Activated B cell treated with CpG ODN at 0.5 μM for 24 hours (primary cell): ENCODE measurements at regions of chr2 and their contacts with region 1.

Region 1: DNA sequence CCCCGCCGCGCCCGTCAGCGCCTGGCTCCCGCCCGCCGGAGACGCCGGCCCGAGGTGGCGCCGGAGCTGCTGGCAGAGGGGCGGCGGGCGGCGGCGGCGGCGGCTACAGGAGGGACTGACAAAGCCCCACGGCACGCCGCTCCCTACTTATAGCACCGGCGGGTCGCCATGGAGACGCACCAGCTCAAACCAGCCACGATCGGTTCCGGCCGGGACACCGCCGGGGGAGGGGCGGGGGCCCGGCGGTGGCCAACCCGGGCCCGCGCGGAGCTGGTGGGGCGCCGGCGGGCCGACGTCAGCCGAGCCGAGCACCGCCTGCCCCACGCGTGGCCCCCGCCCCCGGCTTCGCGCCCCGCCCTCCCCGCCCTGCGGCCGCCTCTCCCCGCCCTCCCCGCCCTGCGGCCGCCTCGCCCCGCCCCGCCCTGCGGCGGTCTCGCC is at the start of gene ODC1:
- DNase-seq: peak; percentile 98
- ATAC-seq: peak; percentile 80
- H3K4me3 Mint-ChIP-seq: peak within 1 kb of the TSS; percentile 85
- H3K27ac Mint-ChIP-seq: peak within 1 kb of the TSS; percentile 85
- H3K4me1 Mint-ChIP-seq: peaks cover 44% of the 10 kb centered on the region
- H3K27me3 Mint-ChIP-seq: no peaks in the 10 kb centered on the region
- CTCF ChIP-seq: no peak
- total RNA-seq, gene ODC1: 192 and 200 TPM in 2 replicates

Region 2: GRCh38 chr2:9799665-9800632 is 648.3 kb before region 1 on chr2:
- CTCF ChIA-PET with region 1: no interaction called
- POLR2A ChIA-PET with region 1: interaction called, 13 read pairs
- intact Hi-C with region 1: no loop called
- DNase-seq: peak; percentile 82
- ATAC-seq: peak; percentile 97
- H3K4me3 Mint-ChIP-seq: peak overlapping the region; percentile 50
- H3K27ac Mint-ChIP-seq: peak overlapping the region; percentile 42
- H3K4me1 Mint-ChIP-seq: peaks cover 20% of the 10 kb centered on the region
- H3K27me3 Mint-ChIP-seq: peaks cover 3% of the 10 kb centered on the region
- CTCF ChIP-seq: peak; percentile 65

Region 3: GRCh38 chr2:10043906-10044601 is 404.2 kb before region 1 on chr2:
- CTCF ChIA-PET with region 1: no interaction called
- POLR2A ChIA-PET with region 1: interaction called, 7 read pairs
- intact Hi-C with region 1: loop called (anchors 1 kb)
- DNase-seq: peak; percentile 88
- ATAC-seq: peak; percentile 68
- H3K4me3 Mint-ChIP-seq: peak overlapping the region; percentile 76
- H3K27ac Mint-ChIP-seq: peak overlapping the region; percentile 72
- H3K4me1 Mint-ChIP-seq: peaks cover 26% of the 10 kb centered on the region
- H3K27me3 Mint-ChIP-seq: no peaks in the 10 kb centered on the region
- CTCF ChIP-seq: no peak

Region 4: DNA sequence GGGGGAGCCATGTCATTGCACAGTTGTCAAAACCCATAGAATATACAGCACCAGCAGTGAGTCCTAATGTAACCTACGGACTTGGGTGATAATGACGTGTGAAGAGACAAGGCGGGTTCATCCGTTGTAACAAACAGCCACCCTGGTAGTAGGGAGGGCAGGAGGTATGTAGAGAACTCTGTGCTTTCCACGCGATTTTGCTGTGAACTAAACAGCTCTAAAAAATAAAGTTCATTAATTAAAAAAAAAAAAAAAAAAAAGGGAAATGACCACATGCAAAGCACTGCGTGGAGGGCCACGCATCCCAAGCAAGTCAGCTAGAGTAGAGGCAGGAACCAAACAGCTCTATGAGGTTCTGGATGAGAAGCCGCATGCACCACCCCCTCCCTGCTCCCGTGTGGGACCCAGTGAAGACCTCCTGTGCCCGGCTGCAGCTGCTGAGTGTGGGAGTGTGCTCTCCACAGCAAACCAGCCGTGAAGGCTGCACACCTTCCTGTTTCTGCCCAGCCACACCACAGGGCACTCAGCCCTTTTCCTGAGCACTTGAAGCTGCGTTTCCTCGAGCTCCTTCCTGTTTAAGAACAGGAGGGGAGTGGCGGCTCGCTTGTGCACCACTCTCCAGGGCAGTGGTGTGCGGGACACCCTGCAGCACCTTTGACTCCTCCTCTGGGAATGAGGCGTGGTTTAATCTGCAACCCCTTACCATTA is 65.7 kb before region 1 on chr2:
- CTCF ChIA-PET with region 1: no interaction called
- POLR2A ChIA-PET with region 1: interaction called, 9 read pairs
- intact Hi-C with region 1: loop called (anchors 2 kb)
- DNase-seq: peak; percentile 46
- ATAC-seq: peak; percentile 64
- H3K4me3 Mint-ChIP-seq: peak overlapping the region; percentile 58
- H3K27ac Mint-ChIP-seq: peak overlapping the region; percentile 59
- H3K4me1 Mint-ChIP-seq: peaks cover 91% of the 10 kb centered on the region
- H3K27me3 Mint-ChIP-seq: no peaks in the 10 kb centered on the region
- CTCF ChIP-seq: no peak

Region 5: DNA sequence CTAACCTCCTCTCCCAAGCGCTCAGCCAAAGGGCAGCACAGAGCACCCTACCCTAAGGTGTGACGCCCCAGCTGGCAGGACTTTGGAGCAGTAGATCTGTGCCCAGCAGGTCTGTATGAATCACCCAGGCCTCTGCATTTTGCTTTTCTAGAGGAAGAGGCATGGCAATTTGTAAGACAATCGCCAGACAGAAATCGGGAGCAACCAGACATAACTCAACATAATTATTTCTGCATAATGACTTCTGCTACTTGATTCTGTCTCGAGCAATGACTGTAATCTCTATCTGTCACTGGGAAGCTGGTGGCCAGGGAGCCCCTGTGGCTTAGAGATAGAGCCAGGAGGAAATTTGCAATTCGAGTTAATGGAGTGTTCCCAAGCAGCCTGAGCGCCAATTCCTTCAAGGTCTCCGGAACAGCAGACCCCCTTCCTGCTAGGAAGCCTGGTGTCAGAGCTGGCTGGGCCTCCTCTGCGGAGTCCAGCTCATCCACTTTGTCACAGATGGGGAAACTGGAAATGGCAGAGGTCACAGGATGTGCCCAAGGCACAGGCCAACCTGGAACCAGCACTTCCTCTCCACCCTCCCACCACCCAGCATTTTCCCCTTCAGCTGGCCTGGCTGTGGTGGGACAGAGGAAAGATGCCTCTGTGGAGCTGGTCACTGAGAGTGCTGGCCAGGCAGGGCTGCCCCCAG is 55.1 kb before region 1 on chr2:
- CTCF ChIA-PET with region 1: no interaction called
- POLR2A ChIA-PET with region 1: no interaction called
- intact Hi-C with region 1: no loop called
- DNase-seq: no peak
- ATAC-seq: no peak
- H3K4me3 Mint-ChIP-seq: no peak overlapping the region
- H3K27ac Mint-ChIP-seq: no peak overlapping the region
- H3K4me1 Mint-ChIP-seq: peaks cover 48% of the 10 kb centered on the region
- H3K27me3 Mint-ChIP-seq: no peaks in the 10 kb centered on the region
- CTCF ChIP-seq: no peak

Region 6: DNA sequence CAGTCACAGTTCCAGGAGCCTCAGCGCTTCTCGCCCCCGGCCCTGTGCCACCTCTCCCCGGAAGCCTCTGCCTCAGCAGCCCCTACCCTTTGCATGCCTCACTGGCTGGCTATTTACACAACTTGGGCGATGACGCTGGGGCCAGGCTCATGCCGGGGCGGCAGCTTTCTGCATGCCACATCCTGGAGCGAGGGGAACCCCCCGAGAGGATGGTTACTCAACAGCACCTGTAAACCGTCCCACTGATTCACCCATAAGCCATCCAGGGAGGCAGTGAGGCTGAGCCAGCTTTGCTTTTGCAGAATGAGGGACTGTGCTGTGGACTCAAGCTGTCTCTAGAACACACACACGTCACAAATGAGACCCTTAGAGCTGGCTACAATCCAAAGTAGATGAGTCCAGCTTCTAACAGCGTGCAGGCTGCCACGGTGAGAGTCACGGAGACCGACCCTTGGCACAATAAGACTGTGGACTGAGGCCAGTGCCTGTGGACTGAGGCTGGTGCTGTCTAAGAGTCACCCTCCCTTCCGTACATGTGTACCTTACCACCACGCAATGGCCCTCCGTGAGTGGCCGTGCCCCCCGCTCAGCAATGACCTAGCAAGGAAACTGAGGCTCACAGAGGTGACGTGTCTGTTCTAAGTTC is 45.5 kb after region 1 on chr2:
- CTCF ChIA-PET with region 1: no interaction called
- POLR2A ChIA-PET with region 1: interaction called, 12 read pairs
- intact Hi-C with region 1: loop called (anchors 2 kb)
- DNase-seq: peak; percentile 42
- ATAC-seq: peak; percentile 96
- H3K4me3 Mint-ChIP-seq: no peak overlapping the region
- H3K27ac Mint-ChIP-seq: peak overlapping the region; percentile 46
- H3K4me1 Mint-ChIP-seq: peaks cover 15% of the 10 kb centered on the region
- H3K27me3 Mint-ChIP-seq: peaks cover 15% of the 10 kb centered on the region
- CTCF ChIP-seq: no peak

Region 7: DNA sequence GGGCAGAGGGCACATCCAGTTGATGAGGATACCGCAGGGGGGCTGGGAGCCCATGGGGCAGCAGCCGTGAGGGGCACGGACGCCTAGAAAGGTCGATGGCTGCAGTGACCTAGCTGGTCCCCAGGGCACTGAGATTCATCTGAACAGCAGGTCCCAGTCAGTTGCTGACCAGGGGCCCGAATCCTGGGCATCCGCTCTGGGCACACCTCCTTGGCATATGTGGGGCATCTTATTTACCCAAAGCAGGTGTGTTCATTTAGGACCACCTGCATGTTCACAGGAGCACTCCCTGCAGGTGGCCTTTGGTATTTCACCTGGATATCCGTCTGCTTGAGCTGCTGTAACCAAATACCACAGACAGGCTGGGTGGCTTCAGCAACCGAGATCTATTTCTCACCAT is 71.9 kb after region 1 on chr2:
- CTCF ChIA-PET with region 1: no interaction called
- POLR2A ChIA-PET with region 1: no interaction called
- intact Hi-C with region 1: no loop called
- DNase-seq: no peak
- ATAC-seq: no peak
- H3K4me3 Mint-ChIP-seq: no peak overlapping the region
- H3K27ac Mint-ChIP-seq: no peak overlapping the region
- H3K4me1 Mint-ChIP-seq: no peaks in the 10 kb centered on the region
- H3K27me3 Mint-ChIP-seq: peaks cover 2% of the 10 kb centered on the region
- CTCF ChIP-seq: no peak

Region 8: DNA sequence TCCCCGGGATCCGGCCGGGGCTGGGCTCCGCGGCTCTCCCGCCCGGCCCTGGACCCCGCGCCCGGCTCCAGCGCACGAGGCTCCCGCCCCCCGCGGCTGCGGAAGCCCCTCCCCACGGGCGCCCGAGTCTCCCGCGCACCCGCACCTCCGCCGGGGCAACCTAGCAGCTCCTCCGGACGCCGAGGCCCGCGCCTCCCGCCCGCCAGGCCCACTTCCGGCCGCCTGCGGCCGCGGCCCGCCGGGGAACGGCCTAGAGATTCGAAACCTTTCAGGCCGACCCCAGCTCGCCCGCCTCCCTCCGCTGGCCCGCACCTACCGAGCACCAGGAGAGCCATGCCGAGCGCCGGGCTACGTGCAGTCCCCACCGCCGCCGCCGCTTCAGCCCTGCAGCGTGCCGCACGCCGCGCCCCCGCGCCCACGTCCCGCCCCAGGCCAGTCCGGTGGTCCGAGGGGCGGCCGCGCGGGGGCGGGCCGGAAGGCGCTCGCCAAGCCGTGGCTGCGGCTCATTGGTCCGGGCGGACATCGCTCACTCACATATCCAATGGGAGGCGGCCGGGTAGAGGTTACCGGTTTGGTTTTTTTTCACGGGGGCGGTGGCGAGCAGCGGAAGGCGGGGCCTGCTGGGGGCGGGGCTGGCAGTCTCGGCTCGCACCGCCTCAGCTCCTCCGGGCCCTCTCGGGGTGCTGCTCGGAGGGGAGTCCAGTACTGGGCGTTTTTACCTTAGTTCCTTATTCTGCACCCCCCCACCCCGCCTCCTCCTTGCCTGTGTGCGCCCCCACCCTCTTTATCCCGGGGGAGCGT is 364.3 kb after region 1 on chr2 and contains the start of gene PDIA6:
- CTCF ChIA-PET with region 1: no interaction called
- POLR2A ChIA-PET with region 1: interaction called, 8 read pairs
- intact Hi-C with region 1: loop called (anchors 1 kb)
- DNase-seq: peak; percentile 97
- ATAC-seq: peak; percentile 86
- H3K4me3 Mint-ChIP-seq: peak within 1 kb of the TSS; percentile 91
- H3K27ac Mint-ChIP-seq: peak within 1 kb of the TSS; percentile 95
- H3K4me1 Mint-ChIP-seq: peaks cover 41% of the 10 kb centered on the region
- H3K27me3 Mint-ChIP-seq: no peaks in the 10 kb centered on the region
- CTCF ChIP-seq: no peak
- total RNA-seq, gene PDIA6: 109 and 119 TPM in 2 replicates

Region 9: DNA sequence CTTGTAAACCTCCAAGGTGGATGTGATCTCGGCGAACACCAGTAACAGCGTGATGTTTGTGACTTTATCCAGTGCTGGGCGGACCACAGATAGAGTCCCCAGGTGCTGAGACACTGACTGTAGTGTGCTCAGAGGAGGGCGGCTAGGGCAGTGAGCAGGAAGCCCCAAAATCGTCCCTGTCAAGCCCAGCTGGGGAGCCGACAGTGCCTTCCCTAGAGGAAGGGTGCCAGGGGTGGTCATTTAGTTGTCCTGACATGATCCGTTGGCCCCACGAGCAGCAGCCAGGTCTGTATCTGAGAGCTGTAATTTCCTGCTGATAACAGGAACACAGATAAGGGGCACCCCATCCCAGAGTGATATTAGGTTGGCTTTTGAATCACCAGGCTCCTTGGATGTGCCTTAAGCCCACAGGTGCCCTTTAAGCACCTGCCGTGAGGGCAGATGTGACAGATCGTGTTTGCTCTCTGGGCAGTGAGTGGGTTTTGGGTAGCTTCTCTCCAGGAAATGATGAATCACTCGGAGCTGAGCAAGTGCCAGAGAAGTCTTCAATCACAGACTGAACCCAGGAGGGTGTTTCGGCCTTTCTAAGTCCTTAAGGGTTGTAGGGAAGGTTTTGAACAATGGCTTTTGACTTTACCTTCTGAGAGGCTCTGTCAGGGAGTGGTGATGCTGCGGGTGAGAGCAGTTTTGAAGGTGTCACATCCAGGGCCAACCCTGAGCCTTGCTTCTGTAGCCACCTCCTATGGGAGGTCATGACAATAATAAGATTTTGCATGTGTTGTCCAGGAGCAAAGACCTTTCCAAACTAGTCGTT is 1305.9 kb after region 1 on chr2:
- CTCF ChIA-PET with region 1: no interaction called
- POLR2A ChIA-PET with region 1: no interaction called
- intact Hi-C with region 1: loop called (anchors 5 kb)
- DNase-seq: peak; percentile 43
- ATAC-seq: peak; percentile 54
- H3K4me3 Mint-ChIP-seq: peak overlapping the region; percentile 82
- H3K27ac Mint-ChIP-seq: peak overlapping the region; percentile 96
- H3K4me1 Mint-ChIP-seq: peaks cover 90% of the 10 kb centered on the region
- H3K27me3 Mint-ChIP-seq: no peaks in the 10 kb centered on the region
- CTCF ChIP-seq: no peak